Right lobe of liver (tissue), 6 donors: ENCODE measurements at regions of chr3 and their contacts with region 1.

Region 1: DNA sequence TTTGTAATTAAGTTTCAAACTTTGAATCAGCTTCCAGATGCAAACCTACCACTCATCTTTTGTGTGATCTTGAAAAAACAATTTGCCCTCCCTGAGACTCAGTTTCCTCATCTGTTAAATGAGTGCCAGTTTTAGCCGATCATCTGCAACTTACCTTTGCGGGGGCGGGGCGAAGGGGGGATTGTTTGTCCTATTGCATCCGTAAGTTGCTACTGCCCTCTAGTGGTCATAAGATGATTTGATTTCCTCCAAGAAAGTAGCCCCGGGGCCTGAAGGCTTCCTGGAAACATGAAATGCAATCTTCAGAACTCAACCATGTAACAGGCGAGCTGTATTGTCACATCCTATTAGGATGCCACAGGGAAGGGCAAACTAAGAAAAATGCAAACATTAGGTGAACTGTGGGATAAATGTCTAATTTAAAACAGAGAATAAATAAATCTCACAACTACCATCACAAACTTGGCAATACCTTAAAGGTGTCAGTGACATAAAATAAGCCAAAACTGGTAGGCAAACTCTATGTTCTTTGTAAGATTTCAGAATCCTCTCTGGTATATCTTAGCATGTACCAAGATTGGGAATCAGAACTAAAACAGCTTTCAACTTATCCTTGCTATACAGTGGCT is 63.5 kb upstream of the CLDN18 start:
- DNase-seq: peak in 2 of 3 donors; percentile 31 to 45
- ATAC-seq: peak; percentile 59 to 72 (median 62)
- H3K4me3 ChIP-seq: no peak overlapping the region
- H3K27ac ChIP-seq: no peak overlapping the region
- H3K4me1 ChIP-seq: no peaks in the 10 kb centered on the region
- H3K27me3 ChIP-seq: no peaks in the 10 kb centered on the region
- CTCF ChIP-seq: peak; percentile 50 to 68 (median 68)
- POLR2A ChIP-seq: no peak

Region 2: GRCh38 chr3:137612291-137612690 is 334.2 kb before region 1 on chr3:
- intact Hi-C with region 1: no loop called
- DNase-seq: no peak
- ATAC-seq: no peak
- H3K4me3 ChIP-seq: no peak overlapping the region
- H3K27ac ChIP-seq: no peak overlapping the region
- H3K4me1 ChIP-seq: no peaks in the 10 kb centered on the region
- H3K27me3 ChIP-seq: no peaks in the 10 kb centered on the region
- CTCF ChIP-seq: no peak
- POLR2A ChIP-seq: no peak

Region 3: DNA sequence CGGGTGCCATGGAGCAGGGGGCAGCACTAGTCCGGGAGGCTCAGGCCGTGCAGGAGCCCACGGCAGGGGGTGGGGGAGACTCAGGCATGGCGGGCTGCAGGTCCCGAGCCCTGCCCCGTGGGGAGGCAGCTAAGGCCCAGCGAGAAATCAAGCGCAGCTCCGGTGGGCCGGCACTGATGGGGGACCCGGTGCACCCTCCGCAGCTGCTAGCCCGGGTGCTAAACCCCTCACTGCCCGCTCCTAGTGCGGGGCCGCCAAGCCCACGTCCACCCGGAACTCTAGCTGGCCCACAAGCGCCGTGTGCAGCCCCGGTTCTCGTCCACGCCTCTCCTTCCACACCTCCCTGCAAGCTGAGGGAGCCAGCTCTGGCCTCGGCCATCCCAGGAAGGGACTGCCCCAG is 231.9 kb before region 1 on chr3:
- intact Hi-C with region 1: loop called in 1 of 2 experiments (anchors 10 kb)
- DNase-seq: no peak
- ATAC-seq: no peak
- H3K4me3 ChIP-seq: no peak overlapping the region
- H3K27ac ChIP-seq: no peak overlapping the region
- H3K4me1 ChIP-seq: no peaks in the 10 kb centered on the region
- H3K27me3 ChIP-seq: no peaks in the 10 kb centered on the region
- CTCF ChIP-seq: no peak
- POLR2A ChIP-seq: no peak